Activated CD8-positive, alpha-beta T cell treated with anti-CD3 and anti-CD28 coated beads for 36 hours (primary cell): ENCODE measurements at regions of chr6 and their contacts with region 1.

Region 1: GRCh38 chr6:32244946-32245398 is 21.1 kb upstream of the NOTCH4 start:
- DNase-seq: peak; percentile 77
- ATAC-seq: peak; percentile 75
- H3K4me3 Mint-ChIP-seq: peak overlapping the region; percentile 1
- H3K27ac Mint-ChIP-seq: no peak overlapping the region
- H3K4me1 Mint-ChIP-seq: peaks cover 26% of the 10 kb centered on the region
- H3K27me3 Mint-ChIP-seq: no peaks in the 10 kb centered on the region
- CTCF ChIP-seq: peak; percentile 95

Region 2: DNA sequence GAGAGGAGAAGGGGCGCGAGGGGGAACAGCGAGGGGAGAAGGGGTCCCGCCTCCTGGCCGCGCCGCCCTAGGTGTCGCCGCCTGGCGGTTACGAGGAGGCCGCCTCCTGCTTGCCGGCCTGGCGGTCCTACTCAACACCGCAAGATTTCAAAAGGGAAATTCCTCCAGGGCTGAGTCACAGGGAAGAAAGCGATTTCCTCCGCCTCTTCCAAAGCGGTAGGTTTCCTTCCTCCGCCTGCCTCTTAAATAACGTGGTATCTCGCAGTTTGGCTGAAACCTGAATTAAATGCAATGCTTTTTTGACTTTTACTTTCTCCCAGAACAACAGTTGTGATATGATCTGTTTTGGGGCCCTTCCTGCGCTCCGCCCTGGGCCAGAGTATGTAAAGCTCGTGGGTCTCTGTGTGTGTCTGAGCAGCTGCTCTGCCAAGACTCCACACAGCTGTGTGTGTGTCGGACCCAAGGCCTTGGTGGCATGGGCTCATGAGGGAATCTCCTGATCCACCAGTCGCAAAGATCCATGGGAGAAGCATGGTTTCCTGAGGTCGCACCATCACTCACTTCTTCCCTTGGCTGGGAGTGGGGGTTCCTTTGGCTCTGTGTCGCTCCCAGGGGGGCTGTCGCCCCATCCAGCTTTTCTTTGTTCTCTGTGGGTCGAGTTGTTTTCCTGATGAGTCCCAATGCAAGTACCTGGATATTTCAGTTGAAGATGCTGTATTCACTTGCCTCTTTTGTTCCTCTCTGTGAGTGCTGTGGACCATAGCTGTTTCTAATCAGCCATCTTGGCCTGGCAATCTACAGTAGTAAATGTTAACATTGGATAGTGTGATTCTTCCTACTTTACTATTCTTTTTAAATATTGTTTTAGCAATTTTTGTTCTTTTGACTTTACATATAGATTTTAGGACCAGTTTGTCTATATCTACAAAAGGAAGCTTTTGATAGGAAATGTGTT is 10.5 kb after region 1 on chr6:
- CTCF ChIA-PET with region 1: interaction called, 25 read pairs
- POLR2A ChIA-PET with region 1: no interaction called
- intact Hi-C with region 1: no loop called
- DNase-seq: peak; percentile 75
- ATAC-seq: peak; percentile 85
- H3K4me3 Mint-ChIP-seq: peak overlapping the region; percentile 9
- H3K27ac Mint-ChIP-seq: peak overlapping the region; percentile 60
- H3K4me1 Mint-ChIP-seq: peaks cover 23% of the 10 kb centered on the region
- H3K27me3 Mint-ChIP-seq: peaks cover 3% of the 10 kb centered on the region
- CTCF ChIP-seq: peak; percentile 70

Region 3: GRCh38 chr6:32393665-32394420 is 148.9 kb after region 1 on chr6:
- CTCF ChIA-PET with region 1: interaction called, 3 read pairs
- POLR2A ChIA-PET with region 1: no interaction called
- intact Hi-C with region 1: loop called (anchors 10 kb)
- DNase-seq: no peak
- ATAC-seq: no peak
- H3K4me3 Mint-ChIP-seq: no peak overlapping the region
- H3K27ac Mint-ChIP-seq: no peak overlapping the region
- H3K4me1 Mint-ChIP-seq: peaks cover 4% of the 10 kb centered on the region
- H3K27me3 Mint-ChIP-seq: peaks cover 26% of the 10 kb centered on the region
- CTCF ChIP-seq: no peak